PC-9 (cell line): ENCODE measurements at regions of chr22 and their contacts with region 1.

Region 1: DNA sequence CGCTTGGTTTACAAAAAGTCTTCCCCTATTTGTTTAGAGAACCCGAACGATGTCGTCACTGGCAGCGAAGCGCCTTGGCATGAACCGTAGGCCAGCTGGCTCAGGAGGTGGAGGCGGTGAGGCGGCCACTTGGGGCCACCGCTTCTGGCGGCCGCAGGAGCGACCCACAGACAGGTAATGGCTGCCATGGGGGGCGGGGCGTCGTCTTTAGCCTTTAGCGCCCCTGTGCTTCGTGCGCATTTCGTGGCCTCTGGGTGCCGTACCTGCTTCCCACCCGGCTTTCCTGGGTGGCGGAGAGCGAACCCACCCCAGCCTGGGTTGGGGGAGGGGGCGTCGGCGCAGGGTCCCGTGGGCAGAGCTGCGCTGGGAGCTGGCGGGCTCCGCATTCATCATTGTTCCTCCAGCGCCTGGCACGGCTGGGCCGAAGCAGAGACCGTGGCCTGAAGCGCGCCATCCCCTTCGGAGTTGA is 469 bp upstream of the OSBP2 start:
- DNase-seq: peak; percentile 59 to 70
- H3K4me3 ChIP-seq: peak overlapping the region; percentile 64
- H3K27ac ChIP-seq: no peak overlapping the region
- H3K4me1 ChIP-seq: peaks cover 9% of the 10 kb centered on the region; the same call in 1 of the 2 replicates
- H3K27me3 ChIP-seq: no peaks in the 10 kb centered on the region
- CTCF ChIP-seq: no peak

Region 2: DNA sequence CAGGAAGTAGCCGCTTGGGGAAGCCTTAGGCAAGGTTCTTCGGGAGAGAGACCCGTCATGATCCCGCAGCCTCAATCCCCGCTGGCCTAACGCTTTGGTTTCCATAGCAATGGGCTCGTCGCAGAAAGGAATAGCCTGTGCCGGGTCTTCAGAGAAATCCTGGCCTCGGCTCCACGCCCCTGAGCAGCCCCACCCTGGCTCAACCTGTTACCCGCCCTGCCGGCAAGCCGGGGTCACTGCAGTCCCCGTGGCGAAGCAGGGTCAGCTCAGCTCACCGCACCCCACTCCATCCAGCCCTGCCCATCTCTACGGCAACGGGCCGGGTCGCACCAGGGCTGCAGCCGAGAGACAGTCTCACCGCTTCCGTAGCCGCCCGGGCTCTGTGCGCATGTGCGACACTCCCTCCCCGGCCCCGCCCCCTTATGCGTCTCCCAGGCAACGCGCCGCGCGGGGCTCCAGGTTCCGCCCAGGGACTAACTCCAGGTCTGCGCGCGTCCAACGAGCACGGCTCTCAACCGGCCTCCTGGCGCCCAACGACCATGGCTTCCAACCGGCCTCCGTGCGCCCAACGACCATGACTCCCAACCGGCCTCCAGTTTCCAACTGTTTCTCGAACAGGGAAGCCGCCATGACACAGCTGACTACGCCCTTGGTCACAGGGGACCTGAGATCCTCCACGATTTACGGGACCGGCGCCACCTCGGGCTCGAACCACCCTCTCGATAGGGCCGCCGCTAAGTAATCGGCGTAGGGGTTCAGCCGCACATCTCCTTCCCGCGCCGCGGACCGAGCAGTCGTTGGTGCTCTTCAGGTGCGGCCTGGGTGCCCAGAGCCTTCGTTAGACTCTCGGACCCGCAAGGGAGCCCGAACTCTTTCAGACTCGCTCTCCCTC is 26.5 kb before region 1 on chr22 and contains the start of gene DUSP18:
- CTCF ChIA-PET with region 1: no interaction called
- POLR2A ChIA-PET with region 1: interaction called, 11 read pairs
- intact Hi-C with region 1: loop called (anchors 2 kb)
- DNase-seq: peak; percentile 84 to 97
- H3K4me3 ChIP-seq: peak within 1 kb of the TSS; percentile 65
- H3K27ac ChIP-seq: no peak within 1 kb of the TSS
- H3K4me1 ChIP-seq: peaks cover 14% of the 10 kb centered on the region
- H3K27me3 ChIP-seq: no peaks in the 10 kb centered on the region
- CTCF ChIP-seq: peak; percentile 61
- total RNA-seq, gene DUSP18: 9.9 and 11.0 TPM in 2 replicates

Region 3: DNA sequence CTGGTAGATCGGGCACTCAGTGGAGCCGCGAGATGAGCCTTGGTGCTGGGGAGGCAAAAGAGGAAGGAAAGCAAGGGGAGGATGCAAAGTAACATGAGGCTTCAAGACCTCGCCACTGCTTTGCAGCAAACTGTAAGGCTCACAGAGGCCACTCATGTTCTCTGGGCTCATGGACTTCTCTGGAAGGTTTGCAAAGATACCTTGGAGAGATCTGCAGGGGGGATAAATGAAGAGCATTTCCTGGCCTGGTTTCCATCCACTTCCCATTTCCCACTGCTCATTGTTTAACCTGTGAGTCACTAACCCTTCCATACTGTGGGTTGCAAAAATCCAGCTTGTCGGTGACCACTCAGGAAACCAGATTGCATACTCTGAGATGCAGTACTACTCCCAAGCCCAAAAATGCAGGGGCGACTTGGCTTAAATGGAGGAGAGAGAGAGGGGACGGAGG is 39.0 kb after region 1 on chr22:
- CTCF ChIA-PET with region 1: no interaction called
- POLR2A ChIA-PET with region 1: interaction called, 10 read pairs
- intact Hi-C with region 1: no loop called
- DNase-seq: no peak
- H3K4me3 ChIP-seq: no peak overlapping the region
- H3K27ac ChIP-seq: no peak overlapping the region
- H3K4me1 ChIP-seq: no peaks in the 10 kb centered on the region
- H3K27me3 ChIP-seq: no peaks in the 10 kb centered on the region
- CTCF ChIP-seq: no peak